ENCODE measurements at regions of chr17 and their contacts with region 1.

Region 1: DNA sequence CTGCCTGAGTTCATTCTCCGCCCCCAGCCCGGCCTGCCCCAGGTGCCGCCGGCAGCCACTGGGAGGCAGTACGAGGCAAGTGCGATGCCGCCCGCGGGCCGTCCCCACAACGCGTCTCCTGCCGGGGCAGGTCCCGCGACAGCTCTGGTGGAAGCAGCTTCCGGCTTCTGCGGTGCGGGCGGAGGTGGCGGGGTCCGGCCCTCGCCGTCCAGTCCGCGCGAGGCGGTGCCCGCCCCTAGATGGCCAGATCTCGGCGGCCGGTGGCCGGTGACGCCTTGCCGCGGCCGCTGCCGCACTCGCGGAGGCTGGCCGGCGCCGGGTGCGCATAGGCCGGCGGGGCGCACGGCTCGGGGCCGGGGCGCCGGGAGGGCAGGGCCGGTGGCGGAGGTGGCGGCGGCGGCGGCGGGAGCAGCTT is 1.8 kb downstream of the GJD3 start:
- DNase-seq: peak; percentile 85

Region 2: DNA sequence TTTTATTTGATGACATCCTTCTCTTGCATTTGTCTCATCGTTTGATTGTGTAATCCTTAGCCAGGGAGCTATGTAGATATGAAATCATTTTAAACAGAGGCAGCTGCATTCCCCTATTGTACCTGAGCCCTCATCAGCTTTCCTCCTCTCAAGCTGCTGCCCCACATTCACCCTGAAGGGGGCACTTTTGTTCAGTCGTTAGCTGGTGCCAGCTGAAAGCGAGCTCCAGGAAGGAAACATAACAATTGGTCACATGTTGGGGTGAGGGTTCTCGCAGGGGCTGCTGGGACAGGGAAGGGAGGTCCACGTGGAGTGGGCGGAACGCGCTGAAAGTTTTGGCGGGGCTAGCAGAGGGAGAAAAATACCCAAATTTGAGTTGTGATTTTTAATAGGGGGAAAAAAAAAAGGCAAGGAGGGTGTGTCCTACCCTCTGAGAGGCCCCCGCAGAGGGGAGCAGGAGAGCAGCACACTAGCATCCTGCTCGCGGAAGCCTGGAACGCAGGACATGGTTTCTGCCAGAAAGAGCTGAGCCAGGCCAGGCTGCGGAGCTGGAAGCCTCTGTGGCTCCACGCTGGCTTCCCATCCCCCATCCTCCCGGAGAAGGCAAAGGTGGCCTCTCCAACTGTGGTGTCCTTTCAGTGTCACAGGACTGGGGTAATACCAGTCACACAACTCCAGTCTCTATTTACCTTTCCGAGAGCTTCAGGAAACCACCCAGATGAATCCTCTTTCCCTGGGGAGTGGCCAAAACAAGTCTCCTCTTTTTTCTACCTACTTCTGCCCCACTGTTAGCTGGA is 249.4 kb before region 1 on chr17:
- intact Hi-C with region 1: no loop called
- DNase-seq: peak; percentile 97

Region 3: GRCh38 chr17:40209404-40210093 is 153.2 kb before region 1 on chr17:
- intact Hi-C with region 1: loop called (anchors 10 kb)
- DNase-seq: no peak

Region 4: GRCh38 chr17:40290629-40291287 is 71.9 kb before region 1 on chr17:
- intact Hi-C with region 1: no loop called
- DNase-seq: no peak

Region 5: DNA sequence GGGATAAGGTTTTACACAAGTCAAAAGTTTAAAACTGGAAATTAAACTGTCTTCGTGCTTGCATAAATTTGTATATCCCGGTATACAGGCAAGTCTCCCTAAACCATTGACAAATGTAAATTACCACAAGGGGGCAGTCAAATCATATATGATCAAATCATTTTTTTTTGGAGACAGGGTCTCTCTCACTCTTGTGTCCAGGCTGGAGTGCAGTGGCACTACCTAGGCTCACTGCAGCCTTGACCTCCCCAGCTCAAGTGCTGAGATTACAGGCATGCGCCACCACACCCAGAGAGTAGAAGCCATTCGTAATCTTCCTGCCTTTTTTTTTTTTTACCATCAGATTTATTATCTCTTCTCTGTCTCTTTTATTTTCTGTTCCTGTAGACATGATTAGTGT is 36.5 kb after region 1 on chr17:
- intact Hi-C with region 1: loop called (anchors 5 kb)
- DNase-seq: no peak

Region 6: GRCh38 chr17:40417609-40418427 is 55.1 kb after region 1 on chr17 and contains the start of gene TOP2A:
- intact Hi-C with region 1: loop called (anchors 5 kb)
- DNase-seq: peak; percentile 96
- total RNA-seq, gene TOP2A: 0.51 TPM

Region 7: GRCh38 chr17:40531051-40531991 is 168.6 kb after region 1 on chr17:
- intact Hi-C with region 1: loop called (anchors 2 kb)
- DNase-seq: peak; percentile 60

Region 8: DNA sequence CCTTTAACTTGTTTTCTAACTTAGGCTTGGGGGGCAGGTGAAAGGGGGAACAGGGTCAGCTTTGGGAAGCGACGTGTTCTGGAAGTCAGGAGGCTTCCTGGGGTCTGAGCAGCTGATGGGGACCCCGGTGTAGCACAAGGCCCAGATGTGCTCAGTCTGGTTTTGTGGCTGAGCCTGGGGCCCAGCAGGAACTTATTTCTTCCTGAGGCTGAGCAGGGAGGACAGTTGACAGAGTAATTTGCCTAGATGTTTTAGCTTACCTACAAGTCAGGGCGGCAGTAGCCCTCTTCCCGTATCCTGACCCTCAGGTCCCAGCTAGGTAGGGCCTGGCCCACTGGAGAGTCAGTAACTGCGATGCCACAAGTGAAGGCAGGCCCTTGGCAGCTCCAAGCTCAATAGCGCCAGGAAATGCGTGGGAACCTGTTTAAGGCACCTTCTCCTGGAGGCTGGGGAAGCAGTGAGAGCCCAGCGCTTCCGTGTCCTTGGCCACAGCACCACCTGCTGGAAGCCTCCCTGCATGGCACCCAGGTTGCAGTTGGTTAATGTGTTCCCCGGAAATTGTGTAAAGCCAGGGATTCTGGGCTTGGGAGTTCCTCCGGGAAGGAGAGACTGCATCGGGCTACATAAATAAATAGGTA is 197.4 kb after region 1 on chr17:
- intact Hi-C with region 1: loop called (anchors 2 kb)
- DNase-seq: peak; percentile 93

Region 9: GRCh38 chr17:40883626-40884334 is 521.1 kb after region 1 on chr17:
- intact Hi-C with region 1: no loop called
- DNase-seq: no peak